PC-3 (cell line): ENCODE measurements at regions of chr9 and their contacts with region 1.

Region 1: DNA sequence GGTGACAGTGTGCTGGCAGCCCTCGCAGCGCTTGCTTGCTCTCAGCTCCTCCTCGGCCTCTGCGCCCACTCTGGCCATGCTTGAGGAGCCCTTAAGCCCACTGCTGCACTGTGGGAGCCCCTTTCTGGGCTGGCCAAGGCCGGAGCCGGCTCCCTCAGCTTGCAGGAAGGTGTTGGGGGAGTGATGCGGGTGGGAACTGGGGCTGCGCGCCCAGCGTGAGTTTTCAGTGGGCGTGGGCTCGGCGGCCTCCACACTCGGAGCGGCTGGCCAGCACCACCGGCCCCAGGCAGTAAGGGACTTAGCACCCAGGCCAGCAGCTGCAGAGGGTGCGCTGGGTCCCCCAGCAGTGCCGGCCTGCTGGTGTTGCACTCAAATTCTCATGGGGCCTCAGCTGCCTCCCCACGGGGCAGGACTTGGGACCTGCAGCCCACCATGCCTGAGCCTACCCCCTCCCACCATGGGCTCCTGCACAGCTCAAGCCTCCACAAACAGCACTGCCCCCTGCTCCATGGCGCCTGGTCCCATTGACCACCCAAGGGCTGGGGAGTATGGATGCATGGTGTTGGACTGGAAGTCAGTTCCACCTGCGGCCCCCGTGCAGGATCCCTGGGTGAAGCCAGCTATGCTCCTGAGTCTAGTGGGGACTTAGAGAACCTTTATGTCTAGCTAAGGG is 223.1 kb upstream of the PTPRD start:
- DNase-seq: no peak
- ATAC-seq: no peak
- H3K4me3 ChIP-seq: no peak overlapping the region
- H3K27ac ChIP-seq: no peak overlapping the region
- H3K4me1 ChIP-seq: no peaks in the 10 kb centered on the region
- H3K27me3 ChIP-seq: no peaks in the 10 kb centered on the region
- CTCF ChIP-seq: no peak

Region 2: DNA sequence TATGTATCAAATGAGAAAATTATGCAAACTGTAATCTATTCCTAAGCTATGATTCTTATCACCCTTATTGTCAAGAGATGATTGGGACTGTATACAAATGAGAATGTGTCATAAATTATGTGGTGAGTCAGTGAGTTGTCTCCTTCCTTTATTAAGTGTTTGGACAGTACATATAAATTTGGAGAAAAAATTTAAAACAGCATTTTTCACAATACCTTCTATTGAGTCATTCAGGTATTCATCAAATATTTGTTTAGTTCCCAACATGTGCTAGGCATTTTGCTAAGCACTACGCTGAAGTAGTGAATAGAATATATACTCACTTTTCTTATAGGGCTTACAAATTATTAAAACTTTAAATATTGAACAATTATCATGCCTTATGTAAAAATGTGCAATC is 186.9 kb before region 1 on chr9:
- CTCF ChIA-PET with region 1: no interaction called
- POLR2A ChIA-PET with region 1: no interaction called
- intact Hi-C with region 1: loop called (anchors 2 kb)
- DNase-seq: peak; percentile 57
- ATAC-seq: peak; percentile 94
- H3K4me3 ChIP-seq: no peak overlapping the region
- H3K27ac ChIP-seq: peak overlapping the region; percentile 30; the same call in 1 of the 2 replicates
- H3K4me1 ChIP-seq: peaks cover 8% of the 10 kb centered on the region; the same call in 1 of the 2 replicates
- H3K27me3 ChIP-seq: no peaks in the 10 kb centered on the region
- CTCF ChIP-seq: no peak

Region 3: DNA sequence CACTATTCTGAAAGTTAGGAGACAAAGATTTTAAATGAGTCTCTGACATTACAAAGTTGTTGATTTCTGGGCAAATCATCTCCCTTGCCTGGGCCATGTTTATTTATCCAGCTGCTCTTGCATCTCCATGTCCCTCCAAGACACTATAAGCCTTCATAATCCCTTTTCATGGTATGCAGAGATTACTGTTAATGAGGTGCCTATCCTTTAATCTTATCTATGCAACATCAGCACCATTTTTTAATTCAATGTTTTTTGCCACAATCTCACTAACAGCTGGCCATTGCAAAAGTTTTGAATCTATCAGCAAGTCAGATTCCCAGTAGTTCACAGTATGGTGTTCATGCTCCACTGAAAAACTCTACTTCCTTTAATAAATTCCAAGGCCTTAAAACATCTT is 114.6 kb before region 1 on chr9:
- CTCF ChIA-PET with region 1: no interaction called
- POLR2A ChIA-PET with region 1: no interaction called
- intact Hi-C with region 1: no loop called
- DNase-seq: no peak
- ATAC-seq: no peak
- H3K4me3 ChIP-seq: no peak overlapping the region
- H3K27ac ChIP-seq: no peak overlapping the region
- H3K4me1 ChIP-seq: no peaks in the 10 kb centered on the region
- H3K27me3 ChIP-seq: no peaks in the 10 kb centered on the region
- CTCF ChIP-seq: no peak

Region 4: GRCh38 chr9:10806868-10807267 is 29.1 kb before region 1 on chr9:
- CTCF ChIA-PET with region 1: no interaction called
- POLR2A ChIA-PET with region 1: no interaction called
- intact Hi-C with region 1: no loop called
- DNase-seq: no peak
- ATAC-seq: no peak
- H3K4me3 ChIP-seq: no peak overlapping the region
- H3K27ac ChIP-seq: no peak overlapping the region
- H3K4me1 ChIP-seq: no peaks in the 10 kb centered on the region
- H3K27me3 ChIP-seq: no peaks in the 10 kb centered on the region
- CTCF ChIP-seq: no peak

Region 5: GRCh38 chr9:11128156-11128555 is 292.2 kb after region 1 on chr9:
- CTCF ChIA-PET with region 1: no interaction called
- POLR2A ChIA-PET with region 1: no interaction called
- intact Hi-C with region 1: no loop called
- DNase-seq: no peak
- ATAC-seq: no peak
- H3K4me3 ChIP-seq: no peak overlapping the region
- H3K27ac ChIP-seq: no peak overlapping the region
- H3K4me1 ChIP-seq: no peaks in the 10 kb centered on the region
- H3K27me3 ChIP-seq: no peaks in the 10 kb centered on the region
- CTCF ChIP-seq: no peak